ENCODE measurements at regions of chr10 and their contacts with region 1.

Region 1: DNA sequence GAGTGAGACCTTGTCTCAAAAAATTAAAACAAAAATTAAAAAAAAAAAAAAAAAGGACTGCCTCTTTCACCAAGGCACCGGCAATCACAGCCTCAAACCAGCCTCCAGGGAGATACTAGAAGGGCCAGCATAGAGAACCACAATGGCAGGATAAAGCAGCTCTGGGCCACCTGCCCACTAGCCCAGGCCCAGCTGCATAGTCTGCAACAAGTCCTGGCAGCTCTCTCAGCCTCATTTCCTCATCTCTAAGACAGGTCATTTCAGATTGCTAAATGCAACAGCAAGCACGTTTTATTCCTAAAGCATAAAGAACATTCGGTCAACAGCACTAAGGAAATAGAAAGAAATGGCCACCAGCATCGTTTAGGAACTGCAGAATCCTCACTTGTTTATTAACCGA is 28.8 kb downstream of the XPNPEP1 start:
- DNase-seq: no peak
- H3K4me3 ChIP-seq: no peak overlapping the region
- H3K4me3 Mint-ChIP-seq: no peak overlapping the region
- H3K27ac ChIP-seq: peak overlapping the region in 1 of 2 donors; percentile 49
- H3K27ac Mint-ChIP-seq: peak overlapping the region in 2 of 7 donors; percentile 59 to 62
- H3K4me1 ChIP-seq: no peaks in the 10 kb centered on the region
- H3K4me1 Mint-ChIP-seq: peaks cover 26% of the 10 kb centered on the region
- H3K27me3 ChIP-seq: no peaks in the 10 kb centered on the region
- H3K27me3 Mint-ChIP-seq: no peaks in the 10 kb centered on the region
- CTCF ChIP-seq: no peak

Region 2: DNA sequence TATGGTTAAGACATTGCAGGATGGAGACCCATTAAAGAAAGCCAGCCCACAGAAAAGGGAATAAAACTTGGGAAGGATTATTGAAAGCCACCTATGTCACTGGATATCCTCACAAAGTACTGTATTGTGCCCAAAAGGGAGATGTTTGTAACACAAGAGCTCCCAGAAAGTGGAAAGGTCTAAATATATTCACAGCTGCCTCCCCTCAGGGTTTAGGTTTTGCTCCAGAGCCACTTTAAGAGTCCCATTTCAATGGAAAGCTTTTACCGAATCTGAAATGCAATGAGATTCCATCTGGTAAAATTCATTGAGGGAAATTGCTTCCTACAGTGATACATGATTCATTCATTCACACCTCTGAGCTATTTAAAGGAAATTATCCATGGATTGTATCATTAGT is 147.7 kb before region 1 on chr10:
- intact Hi-C with region 1: no loop called
- DNase-seq: no peak
- H3K4me3 ChIP-seq: no peak overlapping the region
- H3K4me3 Mint-ChIP-seq: no peak overlapping the region
- H3K27ac ChIP-seq: no peak overlapping the region
- H3K27ac Mint-ChIP-seq: no peak overlapping the region
- H3K4me1 ChIP-seq: no peaks in the 10 kb centered on the region
- H3K4me1 Mint-ChIP-seq: no peaks in the 10 kb centered on the region
- H3K27me3 ChIP-seq: no peaks in the 10 kb centered on the region
- H3K27me3 Mint-ChIP-seq: peaks cover 0 to 1% (median 0%) of the 10 kb centered on the region in 3 donors
- CTCF ChIP-seq: no peak

Region 3: DNA sequence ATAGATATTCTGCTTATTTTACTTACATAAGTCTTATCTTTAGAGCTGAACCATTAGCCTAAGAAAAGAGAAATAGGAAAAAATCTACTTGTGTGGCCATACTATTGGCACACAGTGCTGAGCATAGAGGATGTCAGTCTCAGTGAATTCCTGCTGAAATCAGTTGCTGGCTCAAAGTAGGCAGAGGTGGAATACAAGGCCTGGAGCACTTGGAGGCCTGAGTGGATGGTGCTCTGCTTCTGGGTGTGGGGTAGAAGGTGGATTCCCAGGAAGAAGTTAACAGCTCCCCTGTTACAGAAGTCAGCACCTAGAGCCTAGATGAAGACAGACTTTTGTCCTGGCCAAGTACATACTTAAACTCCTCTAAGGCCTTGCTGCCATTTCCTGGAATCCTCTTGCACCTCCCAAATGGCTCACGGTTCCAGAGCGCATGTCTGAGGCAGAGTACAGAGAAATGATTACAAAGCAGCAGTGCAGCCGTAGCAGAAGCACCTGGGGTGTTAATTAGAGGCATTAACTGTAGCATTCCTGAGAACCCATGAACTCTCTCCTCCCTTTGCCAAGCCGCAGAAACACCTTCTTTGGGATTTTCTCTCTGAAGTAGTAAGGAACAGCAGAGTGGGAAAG is 46.8 kb after region 1 on chr10:
- intact Hi-C with region 1: loop called in 1 of 2 experiments (anchors 5 kb)
- DNase-seq: no peak
- H3K4me3 ChIP-seq: no peak overlapping the region
- H3K4me3 Mint-ChIP-seq: no peak overlapping the region
- H3K27ac ChIP-seq: no peak overlapping the region
- H3K27ac Mint-ChIP-seq: no peak overlapping the region
- H3K4me1 ChIP-seq: no peaks in the 10 kb centered on the region
- H3K4me1 Mint-ChIP-seq: peaks cover 10% of the 10 kb centered on the region
- H3K27me3 ChIP-seq: no peaks in the 10 kb centered on the region
- H3K27me3 Mint-ChIP-seq: peaks cover 0 to 5% (median 4%) of the 10 kb centered on the region in 3 donors
- CTCF ChIP-seq: no peak